ENCODE measurements at regions of chr19 and their contacts with region 1.

Region 1: DNA sequence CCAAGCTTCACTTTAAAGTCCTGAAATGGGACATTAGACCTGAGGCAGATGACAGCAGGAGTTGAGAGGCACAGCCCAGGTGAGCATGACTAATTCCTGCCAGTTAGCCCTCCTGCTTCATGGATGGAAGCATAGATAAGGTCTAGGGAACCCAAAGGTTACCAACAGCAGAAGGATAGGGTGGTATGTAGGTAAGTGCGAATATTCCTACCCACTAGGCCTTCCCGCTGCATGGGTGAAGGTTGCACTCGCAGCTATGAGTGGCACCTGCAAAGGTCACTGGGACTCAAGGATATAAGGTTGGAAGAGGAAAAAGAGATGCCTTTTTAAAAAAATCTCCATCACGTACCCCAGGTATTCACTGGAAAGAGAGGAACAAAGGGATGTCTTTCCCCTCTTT is 12.2 kb upstream of the MLLT1 start:
- DNase-seq: no peak
- H3K4me3 ChIP-seq: no peak overlapping the region
- H3K27ac ChIP-seq: no peak overlapping the region
- H3K4me1 ChIP-seq: no peaks in the 10 kb centered on the region
- H3K27me3 ChIP-seq: no peaks in the 10 kb centered on the region; the same call in 1 of the 2 replicates
- CTCF ChIP-seq: no peak

Region 2: DNA sequence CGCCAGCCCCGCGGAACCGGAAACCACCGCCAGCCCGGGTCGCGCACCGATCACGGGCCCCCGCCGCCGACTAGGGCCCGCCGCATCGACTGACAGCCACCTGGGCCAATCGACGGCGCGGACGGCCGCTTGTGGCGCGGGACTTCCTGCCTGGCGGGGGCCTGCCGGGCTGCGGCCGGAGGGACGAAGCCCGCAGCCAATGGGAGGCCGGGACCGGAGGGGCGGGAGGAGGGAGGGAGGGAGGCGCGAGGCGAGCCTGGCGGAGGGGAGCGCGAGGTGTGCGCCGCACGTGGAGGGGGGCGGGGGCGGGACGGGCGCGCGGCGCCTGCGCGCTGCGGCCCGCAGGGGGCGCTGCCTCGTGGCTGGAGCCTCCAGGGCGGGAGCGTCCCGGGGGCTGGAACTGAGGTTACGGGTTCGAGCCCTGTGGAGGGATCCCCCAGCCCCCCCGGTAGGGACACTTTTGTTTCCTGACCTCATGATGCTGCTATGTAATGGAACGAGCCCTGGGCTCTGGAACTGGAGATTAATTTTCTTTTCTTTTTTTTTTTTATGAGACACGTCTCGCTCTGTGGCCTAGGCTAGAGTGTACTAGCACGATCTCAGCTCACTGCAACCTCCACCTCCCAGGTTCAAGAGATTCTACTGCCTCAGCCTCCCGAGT is 11.9 kb before region 1 on chr19 and contains the start of gene MLLT1:
- CTCF ChIA-PET with region 1: no interaction called
- POLR2A ChIA-PET with region 1: interaction called, 14 read pairs
- intact Hi-C with region 1: no loop called
- DNase-seq: peak; percentile 78 to 93
- H3K4me3 ChIP-seq: peak within 1 kb of the TSS; percentile 75
- H3K27ac ChIP-seq: no peak within 1 kb of the TSS
- H3K4me1 ChIP-seq: no peaks in the 10 kb centered on the region
- H3K27me3 ChIP-seq: peaks cover 9% of the 10 kb centered on the region; the same call in 1 of the 2 replicates
- CTCF ChIP-seq: peak; percentile 49; the same call in 1 of the 2 replicates
- total RNA-seq, gene MLLT1: 36.8 and 44.2 TPM in 2 replicates

Measured in PC-9 (cell line).